Activated naive CD4-positive, alpha-beta T cell treated with anti-CD3 and anti-CD28 coated beads, Interleukin-2, amount 10 ng/mL, durations not matched to agents 7 days and 5 days (primary cell): ENCODE measurements at regions of chr1 and their contacts with region 1.

Region 1: GRCh38 chr1:8987881-8988617 is 38.2 kb downstream of the SLC2A7 start:
- DNase-seq: peak; percentile 80
- H3K4me3 Mint-ChIP-seq: peak overlapping the region; percentile 63
- H3K27ac Mint-ChIP-seq: peak overlapping the region; percentile 95
- H3K4me1 Mint-ChIP-seq: peaks cover 74% of the 10 kb centered on the region
- H3K27me3 Mint-ChIP-seq: no peaks in the 10 kb centered on the region

Region 2: DNA sequence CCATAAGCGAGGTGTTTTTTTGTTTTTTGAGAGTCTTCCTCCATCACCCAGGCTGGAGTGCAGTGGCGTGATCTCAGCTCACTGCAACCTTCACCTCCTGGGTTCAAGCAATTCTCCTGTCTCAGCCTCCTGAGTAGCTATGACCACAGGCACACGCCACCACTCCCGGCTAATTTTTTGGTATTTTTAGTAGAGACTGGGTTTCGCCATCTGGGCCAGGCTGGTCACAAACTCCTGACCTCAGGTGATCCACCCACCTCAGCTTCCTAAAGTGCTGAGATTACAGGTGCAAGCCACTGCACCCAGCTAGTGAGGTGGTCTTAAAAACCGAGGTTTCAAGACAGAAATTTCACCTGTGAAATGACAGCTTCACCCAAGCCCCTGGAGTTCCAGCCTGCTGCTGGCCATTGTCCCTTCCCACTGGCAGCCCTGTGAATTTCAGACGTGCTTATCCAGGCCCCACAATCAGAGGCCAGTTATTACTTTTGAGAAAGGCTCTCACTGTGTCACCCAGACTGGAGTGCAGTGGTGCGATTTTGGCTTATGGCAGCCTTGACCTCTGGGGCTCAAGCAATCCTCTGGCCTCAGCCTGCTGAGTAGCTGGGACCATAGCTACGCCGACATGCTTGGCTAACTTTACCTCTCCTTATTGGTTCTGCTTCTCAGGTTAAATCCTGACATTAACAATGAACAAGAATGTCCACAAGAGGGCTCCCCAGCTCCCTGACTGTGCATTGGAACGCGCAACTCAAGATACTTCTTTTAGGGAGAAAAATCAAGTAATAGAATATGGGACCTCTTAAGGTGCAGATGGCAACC is 129.0 kb before region 1 on chr1:
- CTCF ChIA-PET with region 1: interaction called, 15 read pairs
- DNase-seq: peak; percentile 67
- H3K4me3 Mint-ChIP-seq: no peak overlapping the region
- H3K27ac Mint-ChIP-seq: peak overlapping the region; percentile 78
- H3K4me1 Mint-ChIP-seq: peaks cover 52% of the 10 kb centered on the region
- H3K27me3 Mint-ChIP-seq: no peaks in the 10 kb centered on the region

Region 3: GRCh38 chr1:8910914-8911313 is 77.1 kb before region 1 on chr1:
- CTCF ChIA-PET with region 1: interaction called, 208 read pairs
- DNase-seq: no peak
- H3K4me3 Mint-ChIP-seq: no peak overlapping the region
- H3K27ac Mint-ChIP-seq: no peak overlapping the region
- H3K4me1 Mint-ChIP-seq: peaks cover 31% of the 10 kb centered on the region
- H3K27me3 Mint-ChIP-seq: peaks cover 11% of the 10 kb centered on the region

Region 4: DNA sequence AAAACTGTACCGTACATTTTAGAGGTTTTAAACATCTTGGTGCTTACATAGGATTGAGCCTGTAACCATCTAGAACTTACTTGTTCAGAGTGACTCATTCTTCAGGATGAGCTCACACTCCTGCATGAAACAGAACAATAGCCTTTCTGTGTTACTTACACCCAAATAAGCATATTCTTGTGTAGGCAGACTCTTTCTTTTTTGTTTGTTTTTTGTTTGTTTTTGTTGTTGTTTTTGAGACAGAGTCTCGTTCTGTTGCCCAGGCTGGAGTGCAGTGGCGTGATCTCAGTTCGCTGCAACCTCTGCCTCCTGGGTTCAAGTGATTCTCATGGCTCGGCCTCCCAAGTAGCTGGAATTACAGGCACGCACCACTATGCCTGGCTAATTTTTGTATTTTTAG is 46.1 kb before region 1 on chr1:
- CTCF ChIA-PET with region 1: interaction called, 19 read pairs
- DNase-seq: no peak
- H3K4me3 Mint-ChIP-seq: no peak overlapping the region
- H3K27ac Mint-ChIP-seq: peak overlapping the region; percentile 88
- H3K4me1 Mint-ChIP-seq: peaks cover 93% of the 10 kb centered on the region
- H3K27me3 Mint-ChIP-seq: no peaks in the 10 kb centered on the region

Region 5: DNA sequence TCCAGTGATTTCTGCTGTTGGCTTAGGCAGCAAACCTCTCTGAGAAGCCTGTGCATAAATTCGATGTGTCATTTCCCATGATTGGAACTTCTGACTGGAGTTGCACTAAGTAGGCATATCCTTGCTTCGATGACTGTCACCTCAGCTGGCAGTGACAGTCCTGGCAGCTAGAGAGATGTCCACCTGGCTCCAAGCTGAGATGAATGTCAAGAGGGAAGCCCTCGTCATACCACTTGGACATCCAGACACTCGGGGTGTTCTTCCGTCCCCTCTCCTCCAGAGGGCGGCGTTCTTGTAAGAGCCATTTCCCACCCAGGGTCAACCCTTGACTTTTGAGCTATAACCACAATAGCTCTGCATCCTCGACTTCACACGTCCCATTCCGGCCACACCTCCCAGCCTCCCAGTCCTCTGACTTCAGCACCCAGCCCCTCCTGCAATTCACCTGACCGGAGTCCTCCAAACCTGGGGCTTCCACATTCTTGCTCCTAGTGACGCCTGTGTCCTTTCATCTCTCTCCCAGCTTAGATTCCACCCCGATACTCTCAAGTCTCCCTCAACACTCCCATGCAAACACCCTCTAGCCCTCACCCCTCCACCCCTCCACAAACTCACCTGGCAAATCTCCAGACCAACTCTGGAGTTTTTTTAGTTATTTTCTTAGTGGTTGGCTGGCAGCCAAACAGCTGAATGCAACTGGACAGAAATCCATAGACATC is 25.1 kb before region 1 on chr1:
- CTCF ChIA-PET with region 1: interaction called, 82 read pairs
- DNase-seq: peak; percentile 66
- H3K4me3 Mint-ChIP-seq: peak overlapping the region; percentile 62
- H3K27ac Mint-ChIP-seq: peak overlapping the region; percentile 84
- H3K4me1 Mint-ChIP-seq: peaks cover 94% of the 10 kb centered on the region
- H3K27me3 Mint-ChIP-seq: no peaks in the 10 kb centered on the region

Region 6: DNA sequence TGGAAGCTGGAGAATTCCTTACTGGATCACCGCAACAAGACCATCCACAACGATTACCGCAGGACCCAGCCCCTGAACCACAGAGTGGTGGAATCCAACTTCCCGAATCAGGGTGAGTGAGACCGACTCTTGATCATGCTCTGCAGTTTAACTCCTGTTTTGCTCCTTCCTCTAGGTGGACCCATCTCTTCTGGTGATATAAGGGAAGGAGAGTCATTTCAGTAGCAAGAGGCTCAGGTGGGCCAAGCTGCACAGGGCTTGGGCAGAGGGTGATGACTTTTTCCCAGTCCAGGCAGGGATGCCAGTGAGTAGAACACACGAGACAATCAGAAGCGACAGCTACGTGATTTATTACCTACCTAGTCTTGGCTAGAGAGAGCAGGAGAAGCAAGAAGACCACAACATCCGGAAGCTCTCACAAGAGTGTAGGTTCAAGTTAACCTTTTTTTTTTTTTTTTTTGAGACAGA is 17.1 kb before region 1 on chr1:
- CTCF ChIA-PET with region 1: interaction called, 82 read pairs
- DNase-seq: peak; percentile 75
- H3K4me3 Mint-ChIP-seq: peak overlapping the region; percentile 99
- H3K27ac Mint-ChIP-seq: peak overlapping the region; percentile 96
- H3K4me1 Mint-ChIP-seq: peaks cover 47% of the 10 kb centered on the region
- H3K27me3 Mint-ChIP-seq: no peaks in the 10 kb centered on the region

Region 7: GRCh38 chr1:9052272-9053049 is 64.4 kb after region 1 on chr1:
- CTCF ChIA-PET with region 1: no interaction called
- DNase-seq: no peak
- H3K4me3 Mint-ChIP-seq: no peak overlapping the region
- H3K27ac Mint-ChIP-seq: no peak overlapping the region
- H3K4me1 Mint-ChIP-seq: no peaks in the 10 kb centered on the region
- H3K27me3 Mint-ChIP-seq: peaks cover 15% of the 10 kb centered on the region

Region 8: DNA sequence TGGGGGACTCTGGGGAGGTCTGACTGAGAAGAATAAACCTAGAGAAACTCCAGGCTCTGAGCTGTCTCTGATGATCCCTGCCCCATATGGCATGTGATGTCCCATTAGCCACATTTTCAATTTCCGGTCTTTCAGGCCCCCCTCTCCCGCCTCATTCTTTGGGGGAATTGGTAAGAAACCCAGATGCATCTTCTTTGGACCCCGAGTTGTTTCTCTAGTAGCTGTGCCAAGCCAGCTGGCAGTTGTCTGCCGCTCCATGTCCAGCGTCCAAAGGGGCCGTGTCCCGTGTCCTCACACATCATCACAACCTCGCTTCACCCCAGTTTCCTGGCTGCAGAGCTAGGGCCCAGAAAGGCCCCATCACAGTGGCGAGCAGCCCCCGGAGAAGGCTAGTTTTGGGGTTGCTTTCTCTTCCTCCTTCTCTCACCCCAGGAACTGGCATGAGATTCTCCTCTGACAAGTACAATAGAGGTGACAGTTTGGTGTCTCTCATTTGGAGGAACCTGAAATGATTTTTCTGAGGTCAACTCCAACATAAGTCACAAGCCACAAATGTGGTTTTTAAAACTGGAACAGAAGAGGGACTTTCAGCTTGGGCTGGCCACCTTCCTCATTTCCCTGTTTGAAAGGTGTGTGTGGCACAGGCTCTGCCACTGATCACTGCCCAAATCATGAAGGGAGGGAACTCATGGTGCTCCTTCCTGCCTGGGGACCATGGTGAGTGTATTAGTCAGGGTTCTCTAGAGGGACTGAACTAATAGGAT is 147.2 kb after region 1 on chr1:
- CTCF ChIA-PET with region 1: no interaction called
- DNase-seq: no peak
- H3K4me3 Mint-ChIP-seq: no peak overlapping the region
- H3K27ac Mint-ChIP-seq: no peak overlapping the region
- H3K4me1 Mint-ChIP-seq: no peaks in the 10 kb centered on the region
- H3K27me3 Mint-ChIP-seq: peaks cover 70% of the 10 kb centered on the region